ENCODE measurements at regions of chr15 and their contacts with region 1.

Region 1: GRCh38 chr15:99029341-99030144 is 22.0 kb upstream of the PGPEP1L start:
- DNase-seq: no peak
- H3K4me3 ChIP-seq: no peak overlapping the region
- H3K27ac ChIP-seq: no peak overlapping the region
- H3K4me1 ChIP-seq: no peaks in the 10 kb centered on the region
- H3K27me3 ChIP-seq: no peaks in the 10 kb centered on the region
- CTCF ChIP-seq: no peak
- EP300 ChIP-seq: no peak
- POLR2A ChIP-seq: no peak

Region 2: DNA sequence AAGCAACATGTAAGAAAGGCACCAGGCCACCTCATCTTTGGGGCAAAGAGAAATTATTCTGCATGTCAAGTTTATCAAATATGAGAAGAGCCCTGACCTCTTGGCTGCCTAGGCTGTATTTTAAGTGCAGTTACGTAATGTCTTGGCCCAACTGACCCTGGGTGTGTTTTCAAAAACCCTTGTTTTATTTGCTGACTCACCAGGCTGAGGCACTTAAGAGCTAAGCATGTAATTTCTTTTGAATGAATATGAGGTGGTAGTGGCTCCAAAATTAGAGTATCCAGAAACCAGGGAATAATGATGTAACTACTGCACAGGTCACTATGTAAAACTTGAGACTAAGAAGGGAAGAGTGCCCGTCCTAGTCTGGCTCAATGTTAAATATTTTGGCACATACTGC is 46.2 kb before region 1 on chr15:
- intact Hi-C with region 1: no loop called
- DNase-seq: peak; percentile 74
- H3K4me3 ChIP-seq: no peak overlapping the region
- H3K27ac ChIP-seq: peak overlapping the region in 3 of 4 donors; percentile 47 to 72 (median 47)
- H3K4me1 ChIP-seq: peaks cover 0 to 10% (median 10%) of the 10 kb centered on the region in 4 donors
- H3K27me3 ChIP-seq: no peaks in the 10 kb centered on the region
- CTCF ChIP-seq: no peak
- EP300 ChIP-seq: peak in 1 of 4 donors; percentile 67
- POLR2A ChIP-seq: no peak

Region 3: DNA sequence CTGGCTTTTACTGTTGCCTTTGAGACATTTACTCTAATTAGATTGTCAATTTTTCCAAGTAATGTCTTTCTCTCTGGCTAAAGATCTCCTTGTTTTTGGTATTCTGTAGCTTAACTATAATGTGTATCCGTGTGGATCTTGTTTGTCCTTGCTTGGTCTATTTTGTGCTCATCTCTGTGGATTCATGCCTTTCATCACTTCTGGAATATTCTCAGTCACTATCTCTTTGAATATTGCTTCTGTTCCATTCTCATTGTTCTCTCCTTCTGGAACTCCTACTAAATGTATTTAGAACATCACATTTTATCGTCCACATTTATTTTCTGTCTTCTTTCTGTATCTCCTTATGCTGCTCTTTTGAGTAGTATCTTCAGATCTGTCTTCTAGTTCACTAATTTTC is 34.7 kb before region 1 on chr15:
- intact Hi-C with region 1: loop called (anchors 5 kb)
- DNase-seq: no peak
- H3K4me3 ChIP-seq: no peak overlapping the region
- H3K27ac ChIP-seq: no peak overlapping the region
- H3K4me1 ChIP-seq: no peaks in the 10 kb centered on the region
- H3K27me3 ChIP-seq: no peaks in the 10 kb centered on the region
- CTCF ChIP-seq: no peak
- EP300 ChIP-seq: no peak
- POLR2A ChIP-seq: no peak

Measured in sigmoid colon (tissue), 7 donors.